Gastrocnemius medialis (tissue), 4 donors: ENCODE measurements at regions of chr4 and their contacts with region 1.

Region 1: DNA sequence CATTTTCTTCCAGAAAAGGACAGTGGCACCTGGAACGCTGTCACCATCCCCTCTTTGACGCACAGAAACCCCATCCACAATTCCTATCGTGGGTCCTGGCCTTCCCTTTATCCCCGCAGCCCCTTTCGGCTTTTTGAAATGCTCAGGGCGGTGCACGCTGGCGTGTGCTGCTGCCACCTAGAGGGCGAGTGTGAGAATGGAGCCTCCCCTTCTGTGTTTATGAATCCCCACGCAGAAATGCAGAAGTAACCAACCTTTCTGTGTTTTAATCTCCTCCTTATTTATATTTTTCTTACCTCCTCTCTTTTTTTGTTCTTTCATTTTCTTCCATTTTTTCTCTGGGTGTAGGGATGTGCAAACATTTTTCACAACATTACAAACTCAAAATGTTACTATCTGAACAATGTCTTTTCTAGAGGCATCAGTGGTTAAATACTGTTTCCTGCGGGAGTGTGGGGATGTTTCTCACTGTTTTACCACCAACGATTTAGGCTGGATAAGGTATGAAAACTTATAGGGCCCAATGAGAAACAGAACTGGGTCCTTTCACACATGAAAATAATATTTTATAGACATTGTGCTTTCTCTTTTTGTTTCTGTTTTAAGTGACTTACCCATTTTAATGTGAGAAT is 50.0 kb downstream of the TMA16 start:
- DNase-seq: peak in 1 of 2 donors; percentile 15
- ATAC-seq: peak; percentile 36 to 68
- H3K4me3 ChIP-seq: peak overlapping the region in 3 of 4 donors; percentile 27 to 45 (median 45)
- H3K27ac ChIP-seq: no peak overlapping the region
- H3K4me1 ChIP-seq: no peaks in the 10 kb centered on the region
- H3K27me3 ChIP-seq: no peaks in the 10 kb centered on the region
- CTCF ChIP-seq: peak; percentile 38 to 90 (median 62)
- POLR2A ChIP-seq: no peak

Region 2: GRCh38 chr4:163484906-163485305 is 59.6 kb before region 1 on chr4:
- in situ Hi-C with region 1: loop called in 1 of 4 experiments (anchors 5 kb)
- intact Hi-C with region 1: loop called (anchors 2 kb)
- DNase-seq: no peak
- ATAC-seq: no peak
- H3K4me3 ChIP-seq: no peak overlapping the region
- H3K27ac ChIP-seq: no peak overlapping the region
- H3K4me1 ChIP-seq: no peaks in the 10 kb centered on the region
- H3K27me3 ChIP-seq: peaks cover 0 to 2% (median 0%) of the 10 kb centered on the region in 3 donors
- CTCF ChIP-seq: peak in 4 of 5 experiments; percentile 21 to 60 (median 44)
- POLR2A ChIP-seq: no peak

Region 3: DNA sequence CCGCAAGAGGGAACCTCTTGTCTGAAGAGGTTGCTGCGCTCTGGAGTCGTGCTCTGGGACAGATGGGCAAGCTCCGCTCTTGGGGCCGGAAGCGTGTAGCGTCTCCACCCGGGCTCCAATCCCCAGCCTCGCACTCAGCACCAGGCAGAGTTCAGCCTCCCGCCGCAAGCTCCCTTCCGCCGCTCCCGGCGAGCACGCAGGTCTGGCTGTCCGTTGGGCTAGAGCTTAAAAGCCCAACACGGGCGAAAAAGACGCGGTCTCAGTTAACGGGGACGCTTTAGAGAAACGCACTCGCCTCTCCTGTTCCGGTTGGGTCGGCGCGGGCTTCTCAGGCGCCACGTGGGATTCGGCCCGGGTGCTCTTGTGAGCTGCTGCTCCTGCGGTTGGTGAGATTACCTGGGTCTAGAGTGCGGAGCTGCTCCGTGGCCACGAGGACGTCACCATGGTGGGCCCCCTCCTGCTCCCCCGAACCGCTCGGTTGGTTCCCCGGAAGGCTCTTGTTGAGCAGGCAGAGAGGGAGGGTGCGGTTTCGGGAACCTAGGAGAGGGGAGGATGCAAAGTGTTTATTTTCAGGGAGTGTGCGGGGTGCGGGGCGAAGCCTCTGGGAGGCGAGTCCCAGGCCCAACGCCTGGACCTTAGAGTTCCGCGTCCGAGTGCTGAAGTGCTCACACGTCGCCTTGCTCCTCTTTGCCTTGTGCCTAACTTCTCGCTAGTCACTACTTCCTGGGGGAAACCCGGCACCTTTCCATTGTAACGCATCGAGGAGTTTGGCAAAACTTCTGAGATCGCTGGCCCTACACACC is 50.0 kb before region 1 on chr4 and contains the start of gene TMA16:
- in situ Hi-C with region 1: loop called in 1 of 4 experiments (anchors 5 kb)
- intact Hi-C with region 1: loop called (anchors 2 kb)
- DNase-seq: peak; percentile 53 to 74
- ATAC-seq: peak; percentile 94 to 96
- H3K4me3 ChIP-seq: peak within 1 kb of the TSS; percentile 80 to 87 (median 82)
- H3K27ac ChIP-seq: peak within 1 kb of the TSS; percentile 75 to 87 (median 86)
- H3K4me1 ChIP-seq: peaks cover 9 to 13% of the 10 kb centered on the region in 2 donors
- H3K27me3 ChIP-seq: no peaks in the 10 kb centered on the region
- CTCF ChIP-seq: no peak
- POLR2A ChIP-seq: peak; percentile 16 to 43
- total RNA-seq, gene TMA16: 4.0 to 15.4 (median 8.7) TPM

Region 4: DNA sequence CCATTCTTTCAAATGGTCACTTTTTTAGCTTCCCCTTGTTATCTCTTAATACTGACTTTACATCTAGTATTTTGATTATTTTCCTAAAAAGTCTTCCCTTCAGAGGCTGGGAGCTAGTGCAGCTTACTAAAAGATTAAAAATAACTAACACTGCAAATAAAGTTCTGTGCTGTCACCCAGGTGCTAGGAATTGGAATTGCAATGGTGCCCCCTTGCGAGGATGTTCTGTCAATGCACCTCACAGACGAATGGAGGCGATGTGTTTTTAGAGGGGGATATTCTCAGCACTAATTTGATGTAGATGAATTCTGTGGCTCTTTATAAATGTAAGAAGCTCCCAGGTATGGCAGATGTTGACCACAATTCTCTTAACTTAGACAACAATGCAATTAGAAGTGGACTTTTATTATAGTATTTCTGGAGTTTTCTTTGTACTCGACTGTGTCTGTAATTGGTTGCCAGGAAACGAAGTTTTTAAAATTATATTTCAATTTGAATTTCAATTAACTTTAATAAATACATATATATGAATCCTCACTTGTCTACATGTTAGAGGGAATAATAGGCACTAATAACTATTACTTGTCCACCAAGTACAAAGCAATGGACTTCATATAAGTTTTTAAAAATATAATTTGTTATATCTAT is 1187.4 kb after region 1 on chr4:
- in situ Hi-C with region 1: loop called in 1 of 4 experiments (anchors 25 kb)
- intact Hi-C with region 1: no loop called
- DNase-seq: peak in 1 of 2 donors; percentile 14
- ATAC-seq: peak in 1 of 2 donors; percentile 53
- H3K4me3 ChIP-seq: no peak overlapping the region
- H3K27ac ChIP-seq: no peak overlapping the region
- H3K4me1 ChIP-seq: peaks cover 6 to 8% of the 10 kb centered on the region in 2 donors
- H3K27me3 ChIP-seq: no peaks in the 10 kb centered on the region
- CTCF ChIP-seq: peak; percentile 41 to 67 (median 54)
- POLR2A ChIP-seq: no peak